Left cardiac atrium (tissue), 4 donors: ENCODE measurements at regions of chr6 and their contacts with region 1.

Region 1: DNA sequence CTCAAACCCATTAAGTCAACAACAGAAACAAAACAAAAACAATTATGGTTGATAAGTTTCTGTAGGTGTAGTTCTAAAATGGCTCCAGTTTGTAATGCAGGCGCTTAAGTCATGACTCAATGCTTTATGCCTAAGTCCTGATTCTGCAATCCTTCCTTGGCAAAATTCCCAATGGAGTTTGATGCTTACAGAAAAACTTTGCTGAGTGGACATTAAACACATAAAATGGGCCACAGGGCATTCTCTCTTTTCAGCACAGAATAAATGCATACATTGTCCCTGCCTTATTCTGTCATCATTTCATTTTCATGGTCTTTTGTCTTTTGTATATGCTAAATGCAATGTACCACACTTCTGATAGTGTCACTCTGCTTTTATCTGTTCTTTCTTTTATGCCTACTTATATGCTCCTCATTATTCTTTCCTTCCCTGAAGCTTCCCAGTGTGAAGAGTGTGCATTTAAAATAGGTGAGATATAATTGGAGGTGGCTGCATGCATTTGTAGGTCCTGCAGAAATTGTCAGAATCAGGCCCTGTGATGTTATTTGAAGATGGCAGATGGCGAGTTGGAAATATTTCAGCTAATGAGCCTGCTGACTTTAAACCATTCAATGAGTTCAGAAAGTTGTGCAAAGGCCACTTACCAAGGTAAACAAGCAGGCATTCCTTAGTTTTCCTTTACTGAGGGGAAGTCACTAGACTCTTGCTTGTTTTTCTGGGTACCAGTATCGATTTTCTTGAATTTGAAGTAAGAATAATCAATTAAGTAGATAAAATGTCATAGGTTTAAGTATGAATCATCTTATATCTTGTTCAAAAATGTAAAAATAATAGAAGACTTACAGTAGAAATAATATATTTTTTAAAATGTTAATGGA is 313.1 kb downstream of the TRDN start:
- DNase-seq: no peak
- ATAC-seq: no peak

Region 2: DNA sequence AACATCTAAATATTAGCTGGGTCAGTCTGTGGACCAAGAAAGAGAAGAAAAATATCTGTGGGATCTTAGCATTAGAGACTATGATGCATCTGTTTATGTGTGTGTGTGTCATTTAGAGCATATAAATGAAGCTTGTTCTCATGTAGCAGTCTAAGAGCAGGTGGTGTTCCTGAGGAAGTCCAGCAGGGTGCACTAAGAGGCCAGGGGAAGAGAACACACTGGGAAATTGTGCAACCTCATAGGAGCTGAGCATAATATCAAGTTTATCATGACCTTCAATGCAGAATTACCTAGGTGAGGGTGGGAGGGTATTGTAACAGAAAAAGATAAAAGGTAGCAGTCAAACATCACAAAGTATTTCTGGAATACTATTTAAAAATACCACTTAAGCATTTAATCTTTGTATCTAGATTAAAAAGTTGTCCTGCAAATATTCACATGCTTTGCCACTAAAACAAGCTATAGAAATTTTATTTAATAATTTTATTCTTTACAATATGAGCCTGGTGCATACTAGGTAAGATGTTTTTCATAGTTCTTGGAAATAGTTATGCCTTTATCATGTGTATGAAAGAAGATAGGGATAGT is 454.2 kb before region 1 on chr6:
- intact Hi-C with region 1: loop called (anchors 5 to 10 kb)
- DNase-seq: no peak
- ATAC-seq: peak; percentile 65 to 81

Region 3: DNA sequence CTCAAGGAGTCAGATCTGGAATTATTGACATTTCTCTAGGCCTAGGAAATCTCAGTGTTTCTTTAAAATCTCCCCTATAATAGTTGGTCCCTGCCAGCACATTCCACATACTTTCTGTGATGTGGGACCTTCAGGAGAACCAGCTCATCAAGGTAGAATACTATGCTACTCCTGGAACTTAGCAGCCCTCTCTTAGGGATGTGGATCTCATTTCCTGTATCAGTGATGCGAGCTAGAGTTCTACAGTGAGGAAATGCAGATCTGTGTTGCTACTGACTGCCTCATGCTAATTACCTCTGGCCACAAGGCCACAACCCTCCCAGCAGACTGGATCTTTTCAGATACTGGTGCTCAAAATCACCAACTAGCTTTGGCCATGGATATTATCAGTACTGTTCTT is 133.9 kb before region 1 on chr6:
- intact Hi-C with region 1: no loop called
- DNase-seq: no peak
- ATAC-seq: no peak